HEK293 (cell line): ENCODE measurements at regions of chr17 and their contacts with region 1.

Region 1: DNA sequence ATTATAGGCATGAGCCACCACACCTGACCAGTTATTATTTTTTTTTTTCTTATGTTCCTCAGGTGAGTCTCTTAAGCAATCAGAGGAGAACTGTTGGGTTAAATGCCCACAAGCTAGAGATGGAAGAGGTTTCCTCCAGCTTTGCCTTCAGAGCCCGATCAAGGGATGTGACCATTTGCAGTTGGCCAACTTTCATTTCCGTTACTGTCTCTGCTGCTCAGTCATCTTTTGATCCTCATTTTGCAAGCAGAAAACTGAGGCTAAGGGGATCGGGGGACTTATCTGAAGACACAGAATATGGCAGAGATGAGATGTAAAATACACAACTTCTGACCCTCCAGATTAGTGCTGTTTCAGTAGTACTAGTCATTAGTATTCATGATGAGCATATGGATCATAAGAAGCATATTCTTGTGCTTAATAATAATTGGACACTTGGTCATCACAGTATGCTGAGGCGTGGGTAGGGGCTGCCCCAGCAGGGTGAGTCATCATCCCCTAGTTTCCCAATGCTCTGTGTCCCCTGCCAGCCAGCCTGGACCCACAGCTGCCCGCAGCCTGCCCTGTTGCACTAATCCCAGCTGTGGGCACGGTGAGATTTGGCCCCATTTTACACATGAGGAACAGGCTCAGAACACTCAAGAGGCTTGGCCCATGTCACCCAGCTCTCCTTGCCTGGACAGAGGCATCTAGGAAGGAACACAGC is 189.0 kb downstream of the RAB11FIP4 start:
- H3K4me3 ChIP-seq: no peak overlapping the region
- H3K27ac ChIP-seq: no peak overlapping the region
- H3K4me1 ChIP-seq: peaks cover 7% of the 10 kb centered on the region; the same call in 1 of the 2 replicates
- CTCF ChIP-seq: no peak

Region 2: DNA sequence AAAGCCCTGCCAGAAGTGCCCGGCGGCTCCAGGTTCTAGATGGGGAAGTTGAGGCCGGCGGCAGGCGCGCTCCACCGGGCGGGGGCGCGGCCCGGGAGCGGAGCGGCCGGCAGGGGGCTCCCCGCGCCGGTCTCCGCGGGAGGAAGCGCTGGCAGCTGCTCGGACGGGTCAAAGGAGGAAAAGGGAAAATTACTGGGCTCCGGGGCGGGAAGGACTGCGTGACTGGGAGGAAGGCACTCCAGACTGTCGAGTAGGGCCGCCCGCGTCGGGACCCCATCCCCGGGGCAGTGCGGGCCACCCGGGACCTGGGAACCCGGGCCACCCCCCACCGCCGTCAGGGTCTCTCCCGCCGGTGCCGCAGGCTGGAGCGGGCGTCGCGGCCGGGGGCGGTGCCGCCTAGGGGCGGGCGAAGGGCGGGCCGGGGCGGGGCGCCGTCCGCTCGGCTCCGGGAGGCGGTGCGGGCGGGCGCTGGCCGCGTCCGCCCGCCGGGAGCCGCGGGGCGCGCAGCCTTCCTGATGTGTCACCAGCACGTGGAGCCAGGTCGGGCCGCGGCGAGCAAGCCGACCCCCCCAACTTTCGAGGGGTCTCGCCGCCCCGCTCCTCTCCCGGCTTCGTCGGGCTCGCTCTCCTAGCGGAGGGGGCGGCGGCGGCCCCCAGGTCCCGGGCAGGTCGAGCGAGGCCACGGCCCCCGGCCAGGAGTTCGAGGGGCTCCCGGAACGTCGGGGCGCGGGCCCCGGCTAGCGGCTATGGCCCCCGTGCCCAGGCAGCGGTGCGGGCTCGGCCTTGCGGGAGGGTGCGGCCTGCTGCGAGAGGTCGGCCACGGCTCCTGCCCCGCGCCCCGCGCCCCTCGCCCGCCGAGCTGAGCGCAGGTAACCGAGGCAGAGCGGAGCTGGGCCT is 21.5 kb before region 1 on chr17:
- CTCF ChIA-PET with region 1: interaction called, 13 read pairs
- POLR2A ChIA-PET with region 1: no interaction called
- H3K4me3 ChIP-seq: peak overlapping the region; percentile 52
- H3K27ac ChIP-seq: peak overlapping the region; percentile 57; the same call in 1 of the 2 replicates
- H3K4me1 ChIP-seq: peaks cover 13% of the 10 kb centered on the region
- CTCF ChIP-seq: peak; percentile 54